Psoas muscle (tissue), 8 donors: ENCODE measurements at regions of chr5 and their contacts with region 1.

Region 1: DNA sequence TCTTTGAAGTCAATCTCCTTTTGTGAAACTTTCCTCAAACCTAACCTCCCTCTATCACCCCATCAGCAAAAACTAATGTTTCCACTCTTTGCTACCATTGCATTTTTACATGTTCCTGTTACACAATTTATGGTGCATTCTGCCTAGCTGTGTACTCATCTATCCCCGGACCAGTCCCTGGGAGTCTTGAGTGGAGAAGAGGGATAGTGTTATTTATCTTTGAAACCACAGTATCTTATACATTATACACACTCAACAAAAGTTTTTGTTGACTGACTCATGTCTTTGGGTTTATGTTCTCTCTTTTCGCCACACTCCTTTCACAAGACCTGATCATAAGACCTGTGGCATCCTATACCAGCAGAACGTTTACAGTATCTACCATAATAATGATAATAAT is 26.4 kb downstream of the TNFAIP8 start:
- DNase-seq: no peak
- ATAC-seq: no peak
- H3K4me3 ChIP-seq: no peak overlapping the region
- H3K27ac ChIP-seq: no peak overlapping the region
- H3K4me1 ChIP-seq: no peaks in the 10 kb centered on the region
- H3K27me3 ChIP-seq: no peaks in the 10 kb centered on the region
- CTCF ChIP-seq: no peak

Region 2: GRCh38 chr5:118891252-118891651 is 490.9 kb before region 1 on chr5:
- intact Hi-C with region 1: loop called in 1 of 2 experiments (anchors 2 kb)
- DNase-seq: no peak
- ATAC-seq: no peak
- H3K4me3 ChIP-seq: no peak overlapping the region
- H3K27ac ChIP-seq: no peak overlapping the region
- H3K4me1 ChIP-seq: peaks cover 10% of the 10 kb centered on the region
- H3K27me3 ChIP-seq: no peaks in the 10 kb centered on the region
- CTCF ChIP-seq: no peak

Region 3: DNA sequence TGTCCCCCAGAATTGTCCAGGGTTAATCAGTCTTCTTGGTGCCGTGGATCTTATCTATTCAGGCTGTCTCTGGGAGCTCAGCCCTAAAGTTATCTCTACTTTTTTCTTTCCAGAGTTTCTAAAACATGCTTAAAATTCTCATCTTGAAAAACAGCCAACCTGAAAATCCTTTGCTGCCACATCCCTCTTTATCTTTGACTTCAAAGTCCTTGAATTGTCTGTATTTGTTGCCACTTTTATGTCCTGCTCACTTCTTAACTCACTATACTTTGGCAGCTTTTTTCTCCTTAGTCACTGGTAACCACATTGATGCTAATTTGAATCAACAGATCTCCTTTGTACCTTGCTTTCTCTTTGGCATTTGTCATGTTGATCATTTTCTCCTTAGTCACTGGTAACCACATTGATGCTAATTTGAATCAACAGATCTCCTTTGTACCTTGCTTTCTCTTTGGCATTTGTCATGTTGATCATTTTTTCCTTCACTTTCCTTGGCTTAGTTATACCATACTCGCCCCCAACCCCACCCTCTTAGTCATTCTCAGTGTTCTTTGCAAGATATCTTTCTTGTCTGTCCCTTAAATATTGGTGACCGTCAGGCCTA is 302.7 kb before region 1 on chr5:
- intact Hi-C with region 1: no loop called
- DNase-seq: no peak
- ATAC-seq: no peak
- H3K4me3 ChIP-seq: no peak overlapping the region
- H3K27ac ChIP-seq: no peak overlapping the region
- H3K4me1 ChIP-seq: peaks cover 31% of the 10 kb centered on the region
- H3K27me3 ChIP-seq: no peaks in the 10 kb centered on the region
- CTCF ChIP-seq: no peak